Gastrocnemius medialis (tissue), 4 donors: ENCODE measurements at regions of chr15 and their contacts with region 1.

Region 1: GRCh38 chr15:88476635-88477060 is 9.1 kb downstream of the MRPS11 start:
- DNase-seq: no peak
- ATAC-seq: peak in 1 of 2 donors; percentile 61
- H3K4me3 ChIP-seq: no peak overlapping the region
- H3K27ac ChIP-seq: no peak overlapping the region
- H3K4me1 ChIP-seq: no peaks in the 10 kb centered on the region
- H3K27me3 ChIP-seq: no peaks in the 10 kb centered on the region
- CTCF ChIP-seq: peak in 4 of 5 experiments; percentile 11 to 44 (median 37)
- POLR2A ChIP-seq: no peak

Region 2: DNA sequence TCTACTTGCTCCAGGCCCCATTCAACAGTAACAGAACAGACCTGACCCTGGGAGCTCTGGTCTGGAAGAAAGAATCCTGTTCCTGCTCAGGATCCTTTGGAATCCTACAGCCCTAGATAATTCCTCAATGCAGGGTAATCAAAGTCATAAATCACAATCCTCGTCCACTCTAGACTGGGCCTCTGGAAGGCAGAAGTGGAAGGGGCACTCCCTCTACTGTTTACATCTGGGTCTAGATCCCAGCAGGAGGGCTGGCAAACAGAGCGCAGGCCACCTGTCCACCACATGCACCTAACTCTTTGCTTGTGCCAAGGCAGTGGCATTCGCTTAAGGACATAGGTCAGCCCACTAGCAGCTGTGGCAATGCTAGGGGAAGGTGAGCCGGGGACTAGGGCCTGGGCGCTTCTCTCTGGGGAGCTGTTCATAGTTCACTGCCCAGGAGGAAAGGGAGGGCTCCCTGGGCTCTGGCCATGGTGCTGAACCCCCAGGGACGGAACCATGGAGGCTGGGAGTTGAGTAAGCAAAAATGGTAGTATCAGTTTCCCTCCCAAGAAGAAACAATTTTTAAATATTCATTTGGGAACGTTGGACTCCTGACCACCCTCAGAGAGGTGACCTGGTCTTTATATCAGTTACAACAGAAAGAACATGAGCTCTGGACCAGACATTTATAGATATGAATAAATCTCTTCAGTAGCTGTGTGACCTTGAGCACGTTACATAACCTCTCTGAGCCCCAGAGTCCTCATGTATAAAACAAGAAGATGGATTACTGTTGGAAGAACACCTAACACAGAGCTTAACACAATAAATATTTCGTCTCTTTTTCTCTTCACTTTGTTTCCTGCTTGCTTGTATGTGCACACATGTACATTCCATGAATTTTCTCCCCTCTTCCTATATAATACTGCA is 310.3 kb before region 1 on chr15:
- in situ Hi-C with region 1: no loop called
- intact Hi-C with region 1: no loop called
- DNase-seq: no peak
- ATAC-seq: no peak
- H3K4me3 ChIP-seq: no peak overlapping the region
- H3K27ac ChIP-seq: no peak overlapping the region
- H3K4me1 ChIP-seq: no peaks in the 10 kb centered on the region
- H3K27me3 ChIP-seq: no peaks in the 10 kb centered on the region
- CTCF ChIP-seq: no peak
- POLR2A ChIP-seq: no peak

Region 3: DNA sequence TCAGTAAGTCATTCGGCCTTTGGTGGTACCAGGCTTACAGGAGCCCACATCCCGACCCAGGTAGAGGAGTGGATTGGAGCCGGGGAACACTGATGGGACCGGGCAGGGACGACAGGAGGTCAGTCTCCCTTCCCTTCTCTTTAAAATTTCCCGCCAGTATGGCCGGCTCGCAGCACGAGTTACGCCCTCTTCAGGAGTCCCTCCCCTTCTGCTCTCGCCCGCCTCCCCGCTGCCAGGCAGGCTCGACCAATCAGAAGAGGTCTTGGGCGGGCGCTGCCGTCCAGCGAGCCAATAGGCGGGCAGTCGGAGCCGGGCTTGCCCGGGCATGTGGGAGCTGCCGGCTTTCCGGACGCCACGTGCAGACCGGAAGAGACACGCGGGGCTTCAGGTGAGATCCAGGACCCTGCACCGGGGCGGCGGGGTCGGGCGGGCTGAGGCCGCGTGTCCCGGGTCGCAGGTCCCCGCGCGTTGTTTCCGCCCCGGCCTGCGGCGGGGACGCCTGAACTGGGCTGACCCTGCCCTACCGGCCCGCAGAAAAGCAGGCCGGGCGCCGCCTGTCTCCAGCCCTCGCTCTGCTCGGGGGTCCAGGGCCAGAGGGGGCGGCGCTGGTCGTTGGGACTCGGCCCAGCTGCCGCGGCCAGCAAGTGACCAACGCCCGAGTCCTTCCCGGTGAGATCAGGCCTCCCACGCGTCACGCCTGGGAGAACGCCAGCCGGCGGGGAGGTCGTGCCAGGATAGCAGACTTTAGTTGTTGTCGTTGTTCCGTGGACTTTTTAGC is 144.5 kb after region 1 on chr15 and contains the start of gene AEN:
- in situ Hi-C with region 1: loop called in 3 of 4 experiments (anchors 10 to 25 kb)
- intact Hi-C with region 1: no loop called
- DNase-seq: peak; percentile 94 to 96
- ATAC-seq: peak; percentile 99
- H3K4me3 ChIP-seq: peak within 1 kb of the TSS; percentile 74 to 99 (median 88)
- H3K27ac ChIP-seq: peak within 1 kb of the TSS; percentile 80 to 88 (median 86)
- H3K4me1 ChIP-seq: peaks cover 14 to 31% of the 10 kb centered on the region in 2 donors
- H3K27me3 ChIP-seq: no peaks in the 10 kb centered on the region
- CTCF ChIP-seq: no peak
- POLR2A ChIP-seq: peak; percentile 54 to 69
- total RNA-seq, gene AEN: 16.1 to 19.2 (median 17.3) TPM